ENCODE measurements at regions of chr5 and their contacts with region 1.

Region 1: DNA sequence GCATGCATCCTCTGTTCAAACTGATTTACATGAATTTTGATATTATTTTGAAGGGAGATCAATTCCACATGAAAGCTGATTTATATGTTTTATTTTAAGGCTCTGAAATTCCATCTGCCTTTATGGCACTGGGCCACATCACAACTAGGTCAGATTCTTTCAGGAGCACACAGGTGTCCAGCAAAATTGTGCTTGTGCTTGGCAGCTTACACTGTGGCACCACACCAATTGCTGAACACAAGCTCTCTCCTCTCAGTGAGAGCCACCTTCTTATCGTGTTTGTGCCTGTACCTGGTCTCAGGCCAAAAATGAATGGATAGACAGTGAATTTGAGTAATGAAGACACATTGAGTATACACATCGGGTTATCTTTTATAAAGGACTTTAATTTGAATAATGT is 200.4 kb downstream of the CDH10 start:
- DNase-seq: no peak
- ATAC-seq: no peak
- H3K4me3 ChIP-seq: no peak overlapping the region
- H3K27ac ChIP-seq: no peak overlapping the region
- H3K4me1 ChIP-seq: no peaks in the 10 kb centered on the region
- H3K27me3 ChIP-seq: no peaks in the 10 kb centered on the region
- CTCF ChIP-seq: no peak
- EP300 ChIP-seq: no peak
- POLR2A ChIP-seq: no peak
- RAD21 ChIP-seq: no peak

Region 2: DNA sequence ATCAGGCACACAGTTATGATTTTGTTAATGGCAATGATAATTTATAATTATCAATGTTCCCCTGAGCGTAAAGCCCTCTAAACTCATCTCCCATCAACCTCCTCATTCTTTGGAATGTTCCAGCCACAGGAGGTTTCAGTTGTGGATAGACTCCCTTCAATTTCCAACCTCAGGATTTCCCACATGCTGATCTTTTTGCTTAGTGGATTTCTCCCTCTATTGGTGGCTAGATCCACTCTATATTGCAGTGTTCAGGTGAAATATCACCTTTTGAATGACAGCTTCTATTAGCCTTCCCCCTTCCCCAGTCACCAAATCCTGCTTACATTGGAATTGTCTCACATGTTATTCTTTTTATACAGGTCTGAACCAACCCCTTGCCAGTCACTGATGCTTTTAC is 86.5 kb after region 1 on chr5:
- CTCF ChIA-PET with region 1: no interaction called
- POLR2A ChIA-PET with region 1: no interaction called
- in situ Hi-C with region 1: no loop called
- intact Hi-C with region 1: loop called (anchors 5 kb)
- DNase-seq: no peak
- ATAC-seq: no peak
- H3K4me3 ChIP-seq: no peak overlapping the region
- H3K27ac ChIP-seq: no peak overlapping the region
- H3K4me1 ChIP-seq: no peaks in the 10 kb centered on the region
- H3K27me3 ChIP-seq: no peaks in the 10 kb centered on the region; a peak in 1 of 5 replicates
- CTCF ChIP-seq: no peak
- EP300 ChIP-seq: no peak
- POLR2A ChIP-seq: no peak
- RAD21 ChIP-seq: no peak

Measured in HepG2 (cell line).